ENCODE measurements at regions of chr10 and their contacts with region 1.

Region 1: GRCh38 chr10:66337211-66337610 is 588.6 kb upstream of the LRRTM3 start:
- DNase-seq: no peak
- H3K4me3 ChIP-seq: no peak overlapping the region
- H3K27ac ChIP-seq: no peak overlapping the region
- H3K4me1 ChIP-seq: no peaks in the 10 kb centered on the region
- H3K27me3 ChIP-seq: no peaks in the 10 kb centered on the region
- CTCF ChIP-seq: no peak
- EP300 ChIP-seq: no peak
- POLR2A ChIP-seq: no peak

Region 2: DNA sequence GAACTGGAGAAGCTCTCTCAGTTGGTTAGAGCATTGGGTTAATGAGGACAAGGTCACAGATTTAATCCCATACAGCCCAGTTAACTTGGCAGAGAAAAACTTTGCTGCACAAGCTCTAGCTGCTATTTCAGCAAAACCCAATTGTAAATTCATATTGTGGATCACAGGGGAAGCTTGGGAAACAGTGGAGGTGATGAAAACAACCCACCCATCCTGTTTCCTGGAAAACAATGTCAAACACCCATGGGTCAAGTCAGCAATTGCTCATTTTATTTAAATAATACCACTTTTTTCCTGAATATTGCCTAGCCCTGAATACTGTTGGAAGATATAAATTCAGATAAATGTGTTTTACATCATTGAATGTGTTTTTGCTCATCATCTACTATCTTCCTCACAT is 312.0 kb before region 1 on chr10:
- in situ Hi-C with region 1: no loop called
- intact Hi-C with region 1: loop called (anchors 10 kb)
- DNase-seq: no peak
- H3K4me3 ChIP-seq: no peak overlapping the region
- H3K27ac ChIP-seq: no peak overlapping the region
- H3K4me1 ChIP-seq: no peaks in the 10 kb centered on the region
- H3K27me3 ChIP-seq: no peaks in the 10 kb centered on the region
- CTCF ChIP-seq: no peak
- EP300 ChIP-seq: no peak
- POLR2A ChIP-seq: no peak

Measured in transverse colon (tissue), 4 donors.